Activated CD8-positive, alpha-beta T cell treated with anti-CD3 and anti-CD28 coated beads for 36 hours (primary cell): ENCODE measurements at regions of chr12 and their contacts with region 1.

Region 1: DNA sequence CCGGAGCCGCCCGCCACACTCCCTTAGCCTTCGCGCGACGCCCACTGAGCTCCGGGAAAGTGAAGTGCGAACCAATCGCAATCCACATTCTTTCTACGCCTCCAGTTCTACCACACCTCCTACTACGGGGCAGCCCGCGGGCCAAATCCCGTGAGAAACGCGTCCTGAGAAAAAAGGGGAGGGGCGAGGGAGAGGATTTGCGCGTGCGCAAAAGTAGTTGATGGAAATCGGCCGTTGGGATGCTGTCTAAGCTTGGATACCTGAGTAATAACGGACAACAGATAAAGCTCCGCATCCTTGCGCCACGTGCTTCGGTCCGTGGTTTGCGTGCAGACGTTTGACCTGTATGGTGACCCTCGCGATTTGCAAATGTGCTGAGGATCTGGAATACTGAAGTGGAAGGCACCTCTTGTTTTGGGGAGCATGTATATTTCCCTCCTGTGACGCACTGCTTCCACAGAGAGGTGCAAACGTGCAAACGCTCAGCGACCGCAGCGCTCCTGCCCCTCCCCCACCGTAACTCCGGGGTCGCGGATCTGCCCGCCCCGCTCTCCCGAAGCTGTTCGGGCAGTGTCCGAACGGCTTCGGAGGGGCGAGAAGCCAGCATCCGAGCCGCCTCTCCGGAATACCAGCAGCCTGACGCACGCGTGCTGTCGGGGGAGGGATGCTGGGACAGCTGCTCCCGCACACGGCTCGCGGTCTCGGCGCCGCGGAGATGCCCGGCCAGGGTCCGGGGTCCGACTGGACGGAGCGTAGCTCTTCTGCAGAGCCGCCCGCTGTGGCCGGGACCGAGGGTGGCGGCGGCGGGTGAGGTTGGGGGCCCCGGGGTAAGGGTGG is at the starts of genes FAM216A and GPN3:
- DNase-seq: peak; percentile 97
- ATAC-seq: peak; percentile 82
- H3K4me3 Mint-ChIP-seq: peak within 1 kb of the TSS; percentile 88
- H3K27ac Mint-ChIP-seq: peak within 1 kb of the TSS; percentile 99
- H3K4me1 Mint-ChIP-seq: peaks cover 43% of the 10 kb centered on the region
- H3K27me3 Mint-ChIP-seq: no peaks in the 10 kb centered on the region
- CTCF ChIP-seq: no peak
- total RNA-seq, gene FAM216A: 77.1 to 77.3 TPM
- total RNA-seq, gene GPN3: 69.1 TPM

Region 2: DNA sequence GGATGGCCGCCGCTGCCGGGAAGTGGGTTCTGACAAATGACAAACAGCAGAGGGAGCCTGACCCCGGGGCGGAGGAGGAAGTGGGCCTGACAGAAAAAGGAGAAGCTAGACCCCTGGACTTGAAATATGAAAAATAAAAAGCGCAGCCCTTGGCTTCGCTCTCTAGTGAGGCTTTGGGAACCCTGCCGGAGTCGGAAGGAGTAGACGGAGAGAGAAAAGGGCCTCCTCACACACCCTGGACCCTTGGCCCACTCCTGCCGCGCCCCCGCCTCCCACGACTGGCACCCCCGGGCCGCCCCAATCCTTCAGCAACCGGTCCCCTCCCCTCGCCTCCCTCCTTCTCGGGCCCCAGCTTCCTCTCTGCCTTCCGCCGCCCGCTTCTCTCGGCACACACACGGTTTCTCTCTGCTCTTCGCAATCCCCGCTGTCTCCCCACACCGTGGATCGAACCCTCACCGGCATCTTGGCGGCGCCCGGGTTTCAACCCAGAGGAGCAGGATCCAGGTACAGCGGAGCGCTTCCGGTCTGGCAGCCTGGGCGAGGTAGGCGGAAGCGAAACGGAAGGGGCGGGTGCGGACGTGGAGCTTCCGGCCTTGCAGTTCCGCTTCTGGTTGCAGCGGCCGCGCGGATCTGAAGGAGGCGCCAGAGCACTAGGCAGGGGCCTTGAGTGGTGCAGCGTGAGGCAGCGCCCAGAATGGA is 18.5 kb before region 1 on chr12 and contains the start of gene ARPC3:
- CTCF ChIA-PET with region 1: interaction called, 70 read pairs
- POLR2A ChIA-PET with region 1: interaction called, 49 read pairs
- intact Hi-C with region 1: no loop called
- DNase-seq: peak; percentile 98
- ATAC-seq: peak; percentile 98
- H3K4me3 Mint-ChIP-seq: peak within 1 kb of the TSS; percentile 87
- H3K27ac Mint-ChIP-seq: peak within 1 kb of the TSS; percentile 100
- H3K4me1 Mint-ChIP-seq: peaks cover 34% of the 10 kb centered on the region
- H3K27me3 Mint-ChIP-seq: no peaks in the 10 kb centered on the region
- CTCF ChIP-seq: peak; percentile 74
- total RNA-seq, gene ARPC3: 229 to 240 TPM

Region 3: DNA sequence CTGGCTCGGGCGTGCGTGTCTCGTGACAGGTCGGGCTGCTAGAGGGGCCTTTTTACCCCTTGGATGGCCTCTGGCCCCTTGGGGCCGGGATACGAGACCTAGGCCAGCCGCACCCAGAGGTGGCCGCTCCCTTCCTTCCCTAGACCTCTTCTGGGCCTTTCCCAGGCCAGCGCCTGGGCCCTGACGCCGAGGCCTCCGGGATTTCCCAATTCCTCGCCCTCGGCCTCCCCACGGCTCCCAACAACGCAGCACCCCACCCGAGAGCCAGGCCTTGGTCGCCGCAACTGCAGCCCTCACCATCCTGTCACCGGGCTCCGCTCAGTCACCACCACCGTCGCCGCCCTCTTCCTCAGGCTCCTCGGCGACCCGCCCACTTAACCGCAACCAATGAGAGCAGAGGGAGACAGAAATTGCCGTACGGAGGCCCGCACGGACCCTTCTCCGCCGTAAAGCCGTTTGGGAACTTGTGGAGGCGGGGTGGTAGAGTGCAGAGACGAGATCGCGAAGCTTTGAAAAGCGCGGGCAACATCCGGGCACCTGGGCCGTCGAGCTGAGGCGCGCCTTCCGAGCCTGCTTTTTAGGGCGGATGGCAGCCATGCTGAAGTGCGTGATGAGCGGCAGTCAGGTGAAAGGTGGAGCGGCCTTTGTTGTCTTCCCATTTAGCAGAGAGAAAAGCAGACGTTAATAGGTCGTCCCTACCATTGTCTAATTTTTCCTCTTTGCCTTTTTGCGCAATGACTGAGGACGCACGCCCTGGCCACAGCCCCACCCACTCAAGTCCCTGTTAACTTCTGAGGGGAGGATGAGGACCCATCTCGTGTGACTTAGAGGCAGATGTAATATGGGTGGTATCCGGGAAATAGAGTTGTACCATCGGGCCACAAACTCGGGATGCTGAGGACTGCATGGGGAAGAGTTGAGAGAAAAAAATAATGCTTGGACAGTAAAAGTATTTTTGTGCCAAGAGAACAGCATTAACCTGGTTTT is 33.6 kb after region 1 on chr12 and contains the starts of genes RAD9B and VPS29:
- CTCF ChIA-PET with region 1: interaction called, 12 read pairs
- POLR2A ChIA-PET with region 1: interaction called, 40 read pairs
- intact Hi-C with region 1: loop called (anchors 2 kb)
- DNase-seq: peak; percentile 100
- ATAC-seq: peak; percentile 95
- H3K4me3 Mint-ChIP-seq: peak within 1 kb of the TSS; percentile 97
- H3K27ac Mint-ChIP-seq: peak within 1 kb of the TSS; percentile 96
- H3K4me1 Mint-ChIP-seq: peaks cover 30% of the 10 kb centered on the region
- H3K27me3 Mint-ChIP-seq: no peaks in the 10 kb centered on the region
- CTCF ChIP-seq: no peak
- total RNA-seq, gene RAD9B: 1.7 to 1.9 TPM
- total RNA-seq, gene VPS29: 71.7 to 76.4 TPM

Region 4: GRCh38 chr12:110556705-110557104 is 88.3 kb after region 1 on chr12:
- CTCF ChIA-PET with region 1: no interaction called
- POLR2A ChIA-PET with region 1: no interaction called
- intact Hi-C with region 1: no loop called
- DNase-seq: no peak
- ATAC-seq: no peak
- H3K4me3 Mint-ChIP-seq: no peak overlapping the region
- H3K27ac Mint-ChIP-seq: no peak overlapping the region
- H3K4me1 Mint-ChIP-seq: peaks cover 58% of the 10 kb centered on the region
- H3K27me3 Mint-ChIP-seq: no peaks in the 10 kb centered on the region
- CTCF ChIP-seq: no peak

Region 5: GRCh38 chr12:110577717-110578521 is 109.5 kb after region 1 on chr12:
- CTCF ChIA-PET with region 1: no interaction called
- POLR2A ChIA-PET with region 1: interaction called, 17 read pairs
- intact Hi-C with region 1: no loop called
- DNase-seq: peak; percentile 72
- ATAC-seq: peak; percentile 60
- H3K4me3 Mint-ChIP-seq: peak overlapping the region; percentile 92
- H3K27ac Mint-ChIP-seq: peak overlapping the region; percentile 96
- H3K4me1 Mint-ChIP-seq: peaks cover 67% of the 10 kb centered on the region
- H3K27me3 Mint-ChIP-seq: no peaks in the 10 kb centered on the region
- CTCF ChIP-seq: no peak

Region 6: GRCh38 chr12:110583137-110584059 is 115.0 kb after region 1 on chr12 and contains the start of gene PPTC7:
- CTCF ChIA-PET with region 1: interaction called, 5 read pairs
- POLR2A ChIA-PET with region 1: interaction called, 17 read pairs
- intact Hi-C with region 1: no loop called
- DNase-seq: peak; percentile 98
- ATAC-seq: peak; percentile 92
- H3K4me3 Mint-ChIP-seq: peak within 1 kb of the TSS; percentile 92
- H3K27ac Mint-ChIP-seq: peak within 1 kb of the TSS; percentile 96
- H3K4me1 Mint-ChIP-seq: peaks cover 54% of the 10 kb centered on the region
- H3K27me3 Mint-ChIP-seq: no peaks in the 10 kb centered on the region
- CTCF ChIP-seq: no peak
- total RNA-seq, gene PPTC7: 43.1 to 44.5 TPM